ENCODE measurements at regions of chr6 and their contacts with region 1.

Region 1: DNA sequence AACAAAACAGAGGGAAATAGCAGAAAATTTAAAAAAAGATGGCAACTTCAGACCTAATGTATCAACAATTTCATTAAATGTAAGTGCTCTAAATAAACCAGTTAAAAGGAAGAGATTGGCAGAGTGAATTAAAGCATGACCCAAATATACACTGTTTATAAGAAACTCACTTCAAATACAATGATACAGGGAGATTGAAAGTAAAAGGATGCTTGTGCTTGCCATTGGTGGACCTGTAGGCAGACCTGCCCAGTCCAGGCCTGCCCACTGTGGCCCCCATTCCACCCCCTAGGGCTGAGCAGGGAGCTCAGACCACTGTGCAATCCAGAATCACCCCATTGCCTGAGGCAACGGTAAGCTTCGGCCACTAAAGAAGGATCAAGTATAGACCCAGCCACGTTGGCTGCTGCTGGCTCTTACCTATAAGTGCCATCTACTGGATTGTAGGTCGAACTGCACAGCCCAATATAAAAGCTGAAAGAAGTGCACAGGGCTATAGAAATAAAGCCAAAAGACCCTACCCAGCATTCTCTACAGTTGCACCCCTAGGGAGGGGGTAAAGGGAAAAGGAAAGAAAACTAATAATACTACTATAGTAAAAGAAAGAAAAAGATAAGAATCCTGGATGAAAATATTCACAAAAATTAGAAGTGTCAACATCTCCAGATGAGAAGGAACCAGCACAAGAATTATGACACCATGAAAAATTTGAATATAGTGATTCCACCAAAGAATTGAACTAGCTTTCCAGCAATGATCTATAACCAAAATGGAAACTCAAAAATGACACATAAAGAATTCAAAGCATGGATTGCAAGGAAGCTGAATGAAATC is 36.1 kb downstream of the PSMB1 start:
- DNase-seq: peak; percentile 17
- H3K4me3 Mint-ChIP-seq: no peak overlapping the region
- H3K27ac Mint-ChIP-seq: no peak overlapping the region
- H3K4me1 Mint-ChIP-seq: peaks cover 5% of the 10 kb centered on the region
- H3K27me3 Mint-ChIP-seq: peaks cover 61% of the 10 kb centered on the region

Region 2: GRCh38 chr6:169789982-169790927 is 726.7 kb before region 1 on chr6:
- intact Hi-C with region 1: loop called (anchors 1 kb)
- DNase-seq: peak; percentile 62
- H3K4me3 Mint-ChIP-seq: peak overlapping the region; percentile 78
- H3K27ac Mint-ChIP-seq: peak overlapping the region; percentile 14
- H3K4me1 Mint-ChIP-seq: peaks cover 14% of the 10 kb centered on the region
- H3K27me3 Mint-ChIP-seq: peaks cover 16% of the 10 kb centered on the region

Region 3: GRCh38 chr6:169831450-169832246 is 685.4 kb before region 1 on chr6:
- intact Hi-C with region 1: loop called (anchors 1 kb)
- DNase-seq: peak; percentile 48
- H3K4me3 Mint-ChIP-seq: no peak overlapping the region
- H3K27ac Mint-ChIP-seq: no peak overlapping the region
- H3K4me1 Mint-ChIP-seq: peaks cover 2% of the 10 kb centered on the region
- H3K27me3 Mint-ChIP-seq: peaks cover 38% of the 10 kb centered on the region

Region 4: DNA sequence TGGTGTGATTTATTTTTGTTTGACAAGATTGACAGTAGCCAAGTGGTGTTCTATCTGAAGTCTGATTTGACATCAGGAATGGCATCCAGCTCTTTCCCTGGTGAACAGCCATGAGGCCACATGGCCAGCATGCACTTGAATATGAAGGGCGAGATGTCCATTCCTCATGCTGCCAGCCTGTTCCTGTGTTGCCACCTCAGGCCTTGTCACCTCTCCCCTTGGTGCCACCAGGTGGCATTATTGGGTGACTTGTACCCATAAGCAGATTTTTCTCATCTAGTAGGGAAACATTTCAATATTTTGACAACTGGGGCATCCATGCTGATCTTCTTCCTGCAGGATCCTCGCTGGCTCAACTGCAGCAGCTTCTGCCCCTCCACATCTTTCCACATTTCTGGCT is 566.4 kb before region 1 on chr6:
- intact Hi-C with region 1: loop called (anchors 1 kb)
- DNase-seq: no peak
- H3K4me3 Mint-ChIP-seq: no peak overlapping the region
- H3K27ac Mint-ChIP-seq: no peak overlapping the region
- H3K4me1 Mint-ChIP-seq: peaks cover 13% of the 10 kb centered on the region
- H3K27me3 Mint-ChIP-seq: peaks cover 18% of the 10 kb centered on the region

Region 5: DNA sequence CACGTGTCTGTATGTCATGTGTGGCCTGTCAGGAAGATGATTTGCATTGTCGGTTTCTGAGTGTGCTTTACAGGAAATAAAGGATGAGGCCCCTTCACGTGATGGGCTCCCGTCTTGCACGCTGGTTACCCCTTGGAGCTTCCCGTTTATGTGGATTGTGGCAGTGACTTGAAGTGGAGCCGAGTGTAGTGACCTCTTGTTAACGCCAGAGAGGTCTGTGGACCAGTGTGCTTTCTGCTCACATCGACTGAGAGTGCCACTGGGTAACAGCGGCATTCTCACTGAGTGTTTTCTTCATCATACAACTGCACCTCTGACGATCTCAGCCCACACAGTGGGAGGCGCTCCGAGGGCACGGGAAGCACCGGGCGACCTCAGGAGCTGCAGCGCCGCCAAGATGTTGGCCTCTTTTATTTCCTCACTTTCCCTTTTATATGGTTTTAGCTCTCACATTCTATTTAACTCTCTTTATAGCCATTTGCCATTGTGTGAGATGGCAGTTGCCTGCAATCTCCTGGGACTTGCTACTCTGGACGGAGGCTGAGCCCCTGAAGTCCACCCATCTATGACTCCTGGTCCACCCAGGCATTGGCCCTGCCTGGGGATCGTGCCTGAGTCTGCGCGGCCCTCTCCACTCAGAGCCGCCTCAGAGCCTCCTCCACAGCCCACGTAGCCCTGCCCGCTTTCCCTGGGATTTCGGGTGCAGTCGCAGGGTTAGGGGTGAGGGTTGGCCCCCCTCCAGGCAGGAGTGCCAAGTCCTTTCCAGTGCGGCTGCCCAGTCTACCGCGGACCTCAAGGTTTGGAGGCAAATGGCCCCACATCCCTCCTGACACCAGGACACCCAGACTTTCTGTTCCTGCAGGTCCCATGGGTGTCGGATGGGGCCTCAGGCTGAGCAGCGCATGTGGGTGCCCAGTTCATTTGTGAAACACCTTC is 526.6 kb before region 1 on chr6:
- intact Hi-C with region 1: loop called (anchors 5 kb)
- DNase-seq: peak; percentile 18
- H3K4me3 Mint-ChIP-seq: peak overlapping the region; percentile 35
- H3K27ac Mint-ChIP-seq: peak overlapping the region; percentile 34
- H3K4me1 Mint-ChIP-seq: peaks cover 19% of the 10 kb centered on the region
- H3K27me3 Mint-ChIP-seq: no peaks in the 10 kb centered on the region

Region 6: DNA sequence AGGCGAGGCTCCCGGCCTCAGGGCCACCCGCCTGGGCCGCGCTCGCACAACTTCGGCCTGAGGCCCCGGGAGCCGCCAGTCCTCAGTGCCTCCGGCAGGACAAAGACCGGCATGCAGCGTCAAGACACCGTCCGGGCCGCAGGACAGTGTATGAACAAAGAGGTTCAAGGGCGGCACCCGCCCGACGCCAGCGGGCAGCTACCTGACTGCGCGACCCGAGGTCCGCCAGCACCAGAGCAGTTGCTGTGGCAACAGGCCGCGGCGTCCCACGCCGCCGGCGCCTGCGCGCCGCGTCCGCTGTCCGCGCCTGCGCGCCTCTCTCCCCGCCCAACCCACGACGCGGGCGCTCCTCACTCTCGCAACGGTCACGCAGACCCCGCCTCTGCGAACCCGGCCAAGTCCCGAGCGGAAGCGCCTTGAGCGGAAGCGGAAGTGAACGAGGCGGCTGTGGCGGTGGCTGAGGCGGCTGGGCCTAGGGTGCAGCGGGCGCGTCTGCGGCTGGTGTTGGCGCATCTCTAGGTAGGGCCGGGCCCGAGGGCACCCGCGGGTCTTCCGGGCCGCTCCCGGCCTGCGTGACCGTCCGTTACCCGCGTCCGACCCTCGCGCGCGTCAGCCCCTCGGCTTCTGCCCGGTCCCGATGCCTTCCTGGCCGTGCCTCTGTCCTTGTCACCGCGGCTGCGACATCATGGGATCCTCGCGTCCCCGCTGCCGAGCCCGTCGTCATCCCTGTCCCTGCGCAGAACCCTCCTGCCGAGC is 210.5 kb before region 1 on chr6 and contains the start of gene FAM120B:
- intact Hi-C with region 1: loop called (anchors 5 kb)
- DNase-seq: peak; percentile 96
- H3K4me3 Mint-ChIP-seq: peak within 1 kb of the TSS; percentile 95
- H3K27ac Mint-ChIP-seq: peak within 1 kb of the TSS; percentile 91
- H3K4me1 Mint-ChIP-seq: peaks cover 23% of the 10 kb centered on the region
- H3K27me3 Mint-ChIP-seq: peaks cover 25% of the 10 kb centered on the region
- total RNA-seq, gene FAM120B: 19.6 and 21.8 TPM in 2 replicates

Region 7: DNA sequence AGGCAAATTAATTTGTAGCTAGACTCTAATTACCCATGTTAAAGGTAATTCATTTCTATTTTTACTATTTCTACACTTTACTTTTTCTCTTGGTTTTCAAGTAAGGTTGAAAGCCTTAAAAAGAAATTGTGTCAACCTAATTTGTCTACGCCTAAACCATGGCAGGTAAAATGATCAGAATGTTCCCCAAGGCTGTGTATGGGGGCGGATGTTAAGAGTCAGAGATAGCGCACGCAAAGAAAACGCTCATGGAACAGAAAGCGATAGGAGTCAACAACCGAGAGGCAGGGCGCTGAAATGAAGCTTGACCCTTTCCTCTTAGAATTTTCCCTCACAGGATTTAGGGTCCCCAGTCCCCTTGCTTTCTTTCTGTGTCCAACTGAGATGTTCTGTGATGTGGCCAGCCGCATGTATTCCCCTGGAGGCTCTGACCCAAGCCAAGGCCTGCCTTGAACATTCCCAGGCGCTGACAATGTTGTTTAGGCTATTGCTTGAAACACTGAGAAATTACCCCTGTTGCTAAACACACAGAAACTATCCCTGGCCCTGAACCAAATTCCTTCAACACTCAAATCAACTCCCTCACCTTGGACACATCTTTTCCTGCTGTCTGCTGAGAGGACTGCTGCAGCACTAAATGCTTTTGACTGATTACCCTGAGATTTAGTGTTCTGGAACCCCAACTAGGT is 25.2 kb after region 1 on chr6:
- intact Hi-C with region 1: no loop called
- DNase-seq: no peak
- H3K4me3 Mint-ChIP-seq: no peak overlapping the region
- H3K27ac Mint-ChIP-seq: no peak overlapping the region
- H3K4me1 Mint-ChIP-seq: peaks cover 9% of the 10 kb centered on the region
- H3K27me3 Mint-ChIP-seq: no peaks in the 10 kb centered on the region

Measured in activated T-helper 2 cell treated with anti-CD3 and anti-CD28 coated beads, Interferon-gamma antibody, Interleukin-2, Interleukin-4, amounts not matched to agents 10 μg/mL and 5 μg/mL and 100 μg/mL, durations not matched to agents 14 hours and 24 hours and 36 hours (primary cell).